Adrenal gland (tissue), 19 donors: ENCODE measurements at regions of chr12 and their contacts with region 1.

Region 1: GRCh38 chr12:83005534-83006197 is 319.0 kb downstream of the TMTC2 start:
- DNase-seq: no peak
- H3K4me3 ChIP-seq: no peak overlapping the region
- H3K27ac ChIP-seq: no peak overlapping the region
- H3K4me1 ChIP-seq: no peaks in the 10 kb centered on the region
- H3K27me3 ChIP-seq: no peaks in the 10 kb centered on the region
- CTCF ChIP-seq: no peak
- POLR2A ChIP-seq: no peak

Region 2: DNA sequence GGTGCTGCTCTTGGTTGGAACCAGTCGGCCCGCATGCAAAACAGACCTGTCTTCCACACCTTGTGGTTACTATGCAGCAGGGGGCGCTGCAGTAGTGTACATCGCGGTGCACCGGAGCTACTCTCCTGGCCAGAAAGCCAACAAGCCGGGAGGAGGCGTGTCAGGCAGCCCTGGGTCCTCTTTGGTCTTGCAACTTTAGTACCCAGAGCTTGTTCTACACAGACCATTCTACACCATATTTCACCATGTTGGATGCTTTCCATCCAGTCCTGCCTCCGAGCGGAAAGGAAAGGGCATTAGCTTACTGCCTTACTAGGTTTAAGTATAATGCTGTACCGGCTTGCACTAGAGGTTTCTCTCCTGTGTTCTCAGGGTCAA is 319.9 kb before region 1 on chr12:
- intact Hi-C with region 1: loop called in 1 of 2 experiments (anchors 10 kb)
- DNase-seq: peak; percentile 93 to 98 (median 97)
- H3K4me3 ChIP-seq: peak overlapping the region; percentile 31 to 98 (median 74)
- H3K27ac ChIP-seq: peak overlapping the region; percentile 78 to 96 (median 93)
- H3K4me1 ChIP-seq: peaks cover 0 to 10% of the 10 kb centered on the region in 2 donors
- H3K27me3 ChIP-seq: no peaks in the 10 kb centered on the region
- CTCF ChIP-seq: peak; percentile 77 to 93 (median 88)
- POLR2A ChIP-seq: peak in 1 of 2 donors; percentile 7

Region 3: DNA sequence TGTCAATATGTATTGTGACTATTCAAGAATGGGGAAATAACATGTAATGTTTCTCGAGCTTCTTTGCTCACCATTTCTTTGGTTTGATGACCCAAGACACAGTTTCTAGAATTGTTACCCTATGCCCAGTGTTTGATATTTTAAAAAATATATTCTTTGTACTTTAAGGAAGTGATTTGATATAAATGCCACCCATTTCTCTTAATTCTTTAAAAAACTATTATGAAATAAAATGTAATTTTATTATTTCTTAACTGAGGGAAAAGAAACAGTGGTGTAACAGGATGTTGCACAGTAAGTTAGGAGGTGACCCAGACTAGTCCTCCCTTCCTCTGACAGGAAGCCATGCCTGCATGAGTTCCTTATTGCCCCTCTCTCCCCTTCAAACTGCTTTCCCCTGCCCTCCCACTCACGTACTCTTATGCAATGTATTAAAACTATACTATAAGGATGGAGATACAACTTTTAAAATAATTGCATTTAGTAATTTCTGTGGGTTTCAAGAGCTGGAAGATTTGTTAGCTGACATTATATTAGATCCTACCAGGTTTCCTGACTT is 39.6 kb before region 1 on chr12:
- intact Hi-C with region 1: no loop called
- DNase-seq: peak in 2 of 7 donors; percentile 4 to 12
- H3K4me3 ChIP-seq: no peak overlapping the region
- H3K27ac ChIP-seq: no peak overlapping the region
- H3K4me1 ChIP-seq: no peaks in the 10 kb centered on the region
- H3K27me3 ChIP-seq: no peaks in the 10 kb centered on the region
- CTCF ChIP-seq: no peak
- POLR2A ChIP-seq: no peak

Region 4: DNA sequence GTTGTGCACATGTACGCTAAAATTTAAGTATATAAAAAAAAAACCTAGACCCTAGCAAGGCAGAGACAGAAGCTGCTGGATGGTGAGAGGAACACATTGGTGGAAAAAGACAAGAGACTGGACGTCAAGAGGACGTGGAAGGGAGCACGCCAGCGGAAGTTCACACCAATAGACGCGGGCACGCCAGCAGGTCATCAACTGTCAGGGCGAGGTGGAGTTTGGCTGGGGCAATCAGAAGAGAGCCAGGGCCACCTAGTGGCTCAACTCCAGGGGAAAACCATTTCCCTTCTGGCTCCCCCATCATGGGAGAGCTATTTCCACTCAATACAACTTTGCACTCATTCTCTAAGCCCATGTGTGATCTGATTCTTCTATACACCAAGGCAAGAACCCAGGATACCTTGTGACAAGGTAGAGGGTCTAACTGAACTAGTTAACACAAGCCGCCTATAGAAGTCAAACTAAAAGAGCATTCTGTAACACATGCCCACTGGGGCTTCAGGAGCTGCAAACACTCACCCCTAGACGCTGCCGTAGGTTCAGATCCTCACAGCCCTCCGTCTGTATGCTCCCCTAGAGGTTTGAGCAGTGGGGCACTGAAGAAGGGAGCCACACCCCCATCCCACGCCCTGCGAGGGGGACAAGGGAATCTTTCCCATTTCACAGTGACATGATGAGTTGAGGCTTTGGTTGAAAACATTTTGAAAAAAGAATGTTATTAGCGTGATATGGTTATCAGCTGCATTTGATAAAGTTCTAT is 383.8 kb after region 1 on chr12:
- intact Hi-C with region 1: loop called in 1 of 2 experiments (anchors 10 kb)
- DNase-seq: peak; percentile 37 to 67 (median 59)
- H3K4me3 ChIP-seq: no peak overlapping the region
- H3K27ac ChIP-seq: no peak overlapping the region
- H3K4me1 ChIP-seq: no peaks in the 10 kb centered on the region
- H3K27me3 ChIP-seq: no peaks in the 10 kb centered on the region
- CTCF ChIP-seq: peak; percentile 7 to 57 (median 40)
- POLR2A ChIP-seq: no peak

Region 5: GRCh38 chr12:84502907-84503787 is 1497.5 kb after region 1 on chr12:
- intact Hi-C with region 1: loop called in 1 of 2 experiments (anchors 10 kb)
- DNase-seq: peak; percentile 41 to 74 (median 62)
- H3K4me3 ChIP-seq: no peak overlapping the region
- H3K27ac ChIP-seq: no peak overlapping the region
- H3K4me1 ChIP-seq: peaks cover 0 to 2% of the 10 kb centered on the region in 2 donors
- H3K27me3 ChIP-seq: no peaks in the 10 kb centered on the region
- CTCF ChIP-seq: peak; percentile 54 to 63 (median 58)
- POLR2A ChIP-seq: no peak